ENCODE measurements at regions of chr1 and their contacts with region 1.

Region 1: DNA sequence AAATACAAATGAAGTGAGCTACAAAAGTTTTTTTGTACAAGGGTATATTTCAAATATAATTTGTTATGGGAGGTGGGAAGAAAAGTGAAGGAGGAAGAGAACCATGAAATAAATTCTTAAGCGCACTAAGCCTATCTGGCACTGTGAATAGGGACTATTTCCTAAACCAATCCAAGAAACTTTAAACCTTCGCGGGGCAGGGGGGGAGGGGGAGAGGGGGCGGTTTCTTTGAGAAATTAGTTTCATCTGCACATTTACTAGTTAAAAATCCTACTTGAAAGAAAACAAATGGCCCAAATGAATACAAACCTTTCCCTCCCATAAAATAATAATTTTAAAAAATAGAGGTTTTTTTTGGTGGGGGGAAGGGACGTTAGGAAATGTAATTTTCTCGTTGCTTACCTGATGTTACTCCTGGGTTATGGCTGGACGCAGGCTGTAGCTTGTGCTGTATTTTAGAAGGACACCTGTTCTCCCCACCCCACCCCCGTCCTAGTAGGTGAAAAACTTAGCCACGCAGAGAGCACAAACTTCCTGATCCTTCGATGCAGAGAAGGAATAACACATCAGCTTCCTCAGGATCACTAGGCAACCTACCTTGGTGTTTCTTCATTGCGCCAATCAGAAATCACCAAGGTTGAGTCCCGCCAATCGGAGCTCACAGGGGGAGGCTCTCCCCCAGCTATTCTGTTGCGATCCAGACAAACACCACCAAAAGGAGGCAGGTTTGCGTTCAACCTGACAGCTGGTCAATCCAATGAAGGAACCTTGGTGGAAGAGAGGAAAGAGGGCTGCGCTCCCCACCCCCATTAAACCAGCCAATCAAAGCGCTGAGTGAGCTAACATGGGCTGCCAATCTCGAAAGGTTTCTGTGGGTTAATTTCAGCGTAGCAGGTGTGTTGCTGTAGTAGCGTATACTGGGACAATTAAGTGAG is at the start of gene GOLPH3L:
- DNase-seq: peak; percentile 95

Region 2: DNA sequence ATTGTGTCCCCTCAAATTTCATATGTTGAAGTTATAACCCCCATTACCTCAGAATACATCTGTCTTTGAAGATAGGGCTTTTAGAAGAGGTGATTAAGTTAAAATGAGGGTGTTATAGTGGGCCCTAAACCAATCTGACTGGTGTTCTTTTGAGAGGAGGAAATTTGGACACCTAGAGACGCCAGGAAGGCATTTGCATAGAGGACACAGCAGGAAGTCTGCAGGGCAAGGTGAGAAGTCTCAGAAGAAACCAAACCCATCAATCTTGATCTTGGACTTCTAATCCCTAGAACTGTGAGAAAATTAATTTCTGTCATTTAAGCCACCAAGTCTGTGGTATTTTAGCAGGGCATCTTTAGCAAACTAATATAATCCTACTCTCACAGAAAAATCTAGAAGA is 12.9 kb before region 1 on chr1:
- CTCF ChIA-PET with region 1: no interaction called
- POLR2A ChIA-PET with region 1: interaction called, 11 read pairs
- DNase-seq: no peak

Region 3: GRCh38 chr1:150720098-150720497 is 23.2 kb after region 1 on chr1:
- CTCF ChIA-PET with region 1: no interaction called
- POLR2A ChIA-PET with region 1: no interaction called
- DNase-seq: no peak

Region 4: GRCh38 chr1:150730130-150730721 is 33.4 kb after region 1 on chr1:
- CTCF ChIA-PET with region 1: no interaction called
- POLR2A ChIA-PET with region 1: interaction called, 12 read pairs
- DNase-seq: no peak

Region 5: DNA sequence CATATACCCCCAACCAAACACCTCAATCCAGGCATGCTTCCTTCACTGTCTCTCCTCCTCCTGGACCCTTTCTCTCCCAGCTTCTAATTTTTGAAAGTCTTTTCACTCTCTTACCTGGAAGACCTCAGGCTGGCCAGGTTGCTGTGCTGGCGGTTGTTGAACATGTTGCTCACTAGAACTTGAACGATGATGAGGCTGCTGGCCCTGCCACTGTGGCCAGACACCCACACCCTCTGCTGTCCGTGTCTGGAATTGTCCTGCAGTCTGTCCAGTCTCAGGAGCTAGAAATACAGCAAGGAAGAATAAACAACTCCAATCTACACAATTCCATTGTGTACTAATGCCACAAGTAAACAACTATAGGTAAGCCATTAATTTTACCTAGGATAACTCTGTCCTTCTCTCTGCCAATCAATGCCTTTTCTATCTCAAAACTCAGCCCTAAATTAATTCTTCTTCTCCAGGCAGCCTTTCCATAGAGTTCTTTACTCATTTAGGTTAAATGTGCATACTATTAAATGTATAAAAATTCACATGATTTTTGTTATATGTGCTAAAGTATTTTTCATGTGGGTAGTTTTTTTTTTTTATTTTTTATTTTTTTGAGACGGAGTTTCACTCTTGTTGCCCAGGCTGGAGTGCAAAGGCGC is 116.3 kb after region 1 on chr1:
- CTCF ChIA-PET with region 1: interaction called, 6 read pairs
- POLR2A ChIA-PET with region 1: interaction called, 13 read pairs
- DNase-seq: peak; percentile 74

Measured in HEK293T (cell line).